HAP-1 (cell line): ENCODE measurements at regions of chr22 and their contacts with region 1.

Region 1: DNA sequence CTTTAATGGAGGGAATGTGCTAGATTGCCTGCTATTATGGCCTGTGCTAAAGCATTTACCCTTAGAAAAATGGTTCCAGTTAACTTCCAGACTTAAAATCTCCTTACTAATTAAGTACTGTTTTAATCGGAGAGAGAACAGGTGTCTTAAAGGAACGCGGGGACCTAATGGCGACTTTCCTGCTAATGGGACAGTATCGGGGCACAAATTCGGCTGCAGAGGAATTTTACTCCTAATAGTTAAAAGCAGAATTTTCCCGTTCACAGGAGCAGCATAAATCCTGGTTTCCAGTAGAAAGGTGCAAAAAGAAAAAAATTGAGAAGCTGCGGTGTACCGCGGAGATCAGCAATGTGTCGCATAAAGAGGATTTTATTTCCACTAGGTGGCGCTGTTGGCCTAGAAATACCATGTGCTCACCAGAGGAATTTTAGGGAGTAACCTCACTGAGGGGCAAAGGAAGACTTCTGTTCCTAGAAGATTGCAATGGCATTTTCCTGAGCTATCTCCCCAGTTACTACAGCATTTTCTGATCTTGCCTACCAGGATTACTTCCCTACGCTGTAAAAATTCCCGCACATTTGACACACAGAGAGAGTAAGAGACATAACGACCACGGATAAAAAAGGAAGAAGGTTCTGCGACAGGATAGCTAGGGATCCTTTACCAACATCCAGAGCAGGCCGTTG is 44.5 kb downstream of the ZNF280B start:
- DNase-seq: peak; percentile 52 to 80
- H3K4me3 ChIP-seq: no peak overlapping the region
- H3K4me1 ChIP-seq: no peaks in the 10 kb centered on the region
- H3K27me3 ChIP-seq: peaks cover 2% of the 10 kb centered on the region; the same call in 1 of the 2 replicates

Region 2: GRCh38 chr22:22720201-22720723 is 256.3 kb after region 1 on chr22:
- in situ Hi-C with region 1: loop called (anchors 25 kb)
- DNase-seq: peak; percentile 65 to 73
- H3K4me3 ChIP-seq: no peak overlapping the region
- H3K4me1 ChIP-seq: no peaks in the 10 kb centered on the region
- H3K27me3 ChIP-seq: peaks cover 26% of the 10 kb centered on the region

Region 3: DNA sequence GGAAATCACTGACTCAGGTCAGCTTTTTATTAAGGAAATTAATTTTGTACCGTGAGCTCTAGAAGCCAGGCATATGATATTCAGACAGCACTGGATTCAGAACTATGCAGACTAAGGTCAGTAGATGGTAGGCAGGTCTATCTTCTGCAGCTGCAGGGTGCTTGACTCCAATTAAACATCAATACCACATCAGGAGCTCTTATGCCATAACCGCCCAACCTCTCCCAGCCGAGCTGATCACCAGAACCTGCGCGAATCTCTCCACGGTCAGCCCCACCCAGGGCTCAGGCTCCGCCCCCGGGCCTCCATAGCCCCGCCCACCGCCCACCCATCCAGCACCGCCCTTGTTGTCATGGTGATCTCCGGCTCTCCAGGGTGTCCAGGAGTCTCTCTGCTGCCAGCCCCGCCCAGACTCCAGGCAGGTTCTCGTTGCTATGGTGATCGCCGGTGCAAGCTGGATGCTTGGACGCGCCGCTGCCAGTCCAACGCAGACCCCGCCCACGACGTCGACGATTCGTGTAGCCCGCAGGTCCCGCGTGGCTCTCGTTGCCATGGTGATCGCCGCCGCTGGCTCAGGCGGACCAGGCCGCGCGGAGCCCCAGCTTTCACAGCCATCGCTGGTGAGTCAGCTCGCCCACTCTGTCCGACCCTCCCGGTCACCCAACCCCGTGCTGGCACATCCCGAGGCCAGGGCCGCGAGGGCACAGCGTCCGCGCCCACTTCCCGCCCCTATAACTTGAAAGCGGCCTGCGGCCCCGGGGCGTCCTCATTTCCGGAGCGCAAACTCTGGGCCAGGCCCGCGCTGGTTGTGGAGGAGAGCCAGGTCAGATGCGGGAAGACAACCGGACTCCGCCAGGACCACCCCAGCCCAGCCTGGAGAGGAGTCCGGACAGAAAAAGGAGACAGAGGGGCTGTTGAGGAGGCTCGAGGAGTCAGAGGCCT is 681.2 kb after region 1 on chr22 and contains the start of gene RAB36:
- in situ Hi-C with region 1: loop called (anchors 25 kb)
- DNase-seq: peak; percentile 94 to 99
- H3K4me3 ChIP-seq: peak within 1 kb of the TSS; percentile 20
- H3K4me1 ChIP-seq: peaks cover 10% of the 10 kb centered on the region
- H3K27me3 ChIP-seq: no peaks in the 10 kb centered on the region